HEK293 (cell line): ENCODE measurements at regions of chr9 and their contacts with region 1.

Region 1: DNA sequence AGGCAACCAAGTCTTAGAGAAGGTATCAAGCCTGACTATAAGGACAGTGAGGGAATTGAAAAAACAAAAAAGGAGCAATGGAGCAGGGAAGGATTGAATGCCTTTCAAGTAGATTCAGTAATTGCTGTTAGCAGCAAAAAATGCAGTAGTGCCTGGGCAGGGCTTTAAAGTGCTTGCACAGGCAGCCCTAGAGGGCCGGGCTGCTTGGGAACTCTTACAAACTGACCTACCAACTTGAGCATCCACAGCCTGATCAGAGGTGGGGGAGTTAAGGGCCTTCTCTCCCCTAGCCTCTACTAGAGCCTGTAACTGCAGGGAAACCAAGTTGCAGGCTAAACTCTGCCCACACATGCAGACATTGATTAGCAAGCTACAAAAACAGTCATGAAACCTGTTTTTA is 19.4 kb downstream of the FXN start:
- H3K4me3 ChIP-seq: no peak overlapping the region
- H3K27ac ChIP-seq: no peak overlapping the region
- H3K4me1 ChIP-seq: no peaks in the 10 kb centered on the region
- CTCF ChIP-seq: no peak

Region 2: GRCh38 chr9:68895741-68896478 is 159.1 kb before region 1 on chr9:
- CTCF ChIA-PET with region 1: no interaction called
- POLR2A ChIA-PET with region 1: no interaction called
- H3K4me3 ChIP-seq: no peak overlapping the region
- H3K27ac ChIP-seq: no peak overlapping the region
- H3K4me1 ChIP-seq: peaks cover 2% of the 10 kb centered on the region; the same call in 1 of the 2 replicates
- CTCF ChIP-seq: no peak

Region 3: GRCh38 chr9:69044240-69045219 is 10.5 kb before region 1 on chr9:
- CTCF ChIA-PET with region 1: interaction called, 17 read pairs
- POLR2A ChIA-PET with region 1: no interaction called
- H3K4me3 ChIP-seq: no peak overlapping the region
- H3K27ac ChIP-seq: no peak overlapping the region
- H3K4me1 ChIP-seq: peaks cover 3% of the 10 kb centered on the region; the same call in 1 of the 2 replicates
- CTCF ChIP-seq: no peak

Region 4: DNA sequence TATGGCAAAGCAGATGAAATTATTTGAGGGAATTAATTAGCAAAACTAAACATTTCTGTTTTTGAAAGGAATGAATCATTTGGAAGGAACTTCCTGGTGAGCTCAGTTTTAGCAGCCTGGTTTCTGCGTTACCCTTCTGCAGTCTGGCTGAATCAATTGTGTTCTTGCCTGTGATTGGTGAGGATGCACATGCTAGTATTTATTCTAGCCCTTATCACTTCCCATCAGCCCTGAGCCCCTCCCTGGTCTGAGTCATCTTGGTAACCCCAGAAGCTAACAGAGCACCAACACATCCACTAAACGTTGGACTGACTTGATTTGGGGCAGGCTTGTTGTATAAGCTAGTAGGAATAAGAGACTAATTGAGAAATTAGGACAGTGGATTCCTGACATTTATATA is 125.7 kb after region 1 on chr9:
- CTCF ChIA-PET with region 1: interaction called, 12 read pairs
- POLR2A ChIA-PET with region 1: no interaction called
- H3K4me3 ChIP-seq: no peak overlapping the region
- H3K27ac ChIP-seq: no peak overlapping the region
- H3K4me1 ChIP-seq: peaks cover 20% of the 10 kb centered on the region
- CTCF ChIP-seq: no peak

Region 5: DNA sequence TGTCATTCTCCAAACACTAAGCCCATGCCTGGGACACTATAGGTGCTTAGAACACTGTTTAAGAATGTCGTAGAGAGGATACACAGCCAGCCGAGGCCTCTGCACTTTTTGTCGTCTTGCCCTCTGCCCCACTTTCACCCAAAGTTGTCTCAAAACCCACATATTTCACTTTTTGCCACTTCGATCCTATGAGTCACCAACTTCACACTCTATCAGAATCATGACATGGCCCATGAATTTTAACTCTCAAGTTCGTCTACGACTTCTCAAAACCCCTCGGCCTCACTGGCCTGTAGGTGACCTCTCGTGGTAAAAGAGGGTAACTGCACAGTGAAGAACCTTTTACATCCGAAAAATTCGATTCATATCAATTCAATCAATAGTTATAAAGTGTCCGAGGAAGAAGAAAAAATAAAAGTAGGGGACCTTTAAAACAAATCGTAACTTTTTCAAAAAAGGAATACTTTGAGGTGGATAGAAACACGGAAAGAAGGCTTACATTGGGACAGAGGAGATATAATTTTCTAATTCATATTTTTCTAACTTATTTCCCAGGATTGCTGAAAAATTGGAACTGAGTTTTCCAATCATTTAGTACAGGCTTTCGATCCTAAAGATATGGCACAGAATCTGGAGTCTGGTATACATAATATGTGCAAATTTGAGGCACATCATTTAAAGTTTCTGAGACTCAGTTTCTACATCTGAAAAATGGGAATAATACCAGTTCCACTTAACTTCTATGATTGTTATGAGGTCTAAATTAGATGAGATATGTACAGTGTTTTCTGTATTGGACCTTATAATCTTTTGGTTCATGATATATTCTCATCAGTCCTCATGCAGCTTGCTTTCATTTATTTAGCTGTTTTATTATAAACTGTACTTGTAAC is 494.6 kb after region 1 on chr9:
- CTCF ChIA-PET with region 1: interaction called, 10 read pairs
- POLR2A ChIA-PET with region 1: no interaction called
- H3K4me3 ChIP-seq: no peak overlapping the region
- H3K27ac ChIP-seq: no peak overlapping the region
- H3K4me1 ChIP-seq: no peaks in the 10 kb centered on the region
- CTCF ChIP-seq: 0 out of 2 replicates have a peak, but pooled peaks have one; percentile 36